ENCODE measurements at regions of chr9 and their contacts with region 1.

Region 1: DNA sequence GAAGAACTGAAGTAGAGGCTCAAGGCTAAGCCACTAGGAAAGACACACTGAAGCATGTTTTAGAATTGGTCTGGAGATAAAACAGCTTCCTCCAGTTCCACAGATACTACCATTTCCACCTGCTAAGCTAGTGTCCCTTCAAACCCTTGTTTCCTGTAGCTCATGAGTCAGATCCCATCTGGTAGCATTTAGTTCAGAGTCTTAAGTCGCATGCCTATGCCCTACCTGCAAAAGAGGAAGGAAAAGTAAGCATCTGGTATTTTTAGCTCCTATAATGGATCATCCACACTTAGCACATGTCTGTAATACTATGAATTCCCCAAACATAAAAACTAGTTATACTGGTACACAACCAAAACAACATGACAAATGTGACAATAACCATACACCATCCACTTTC is 92.1 kb downstream of the CDKN2A start:
- DNase-seq: no peak
- H3K4me3 ChIP-seq: no peak overlapping the region
- H3K27ac ChIP-seq: no peak overlapping the region
- H3K4me1 ChIP-seq: no peaks in the 10 kb centered on the region
- H3K27me3 ChIP-seq: no peaks in the 10 kb centered on the region
- CTCF ChIP-seq: no peak
- EP300 ChIP-seq: no peak
- POLR2A ChIP-seq: no peak

Region 2: GRCh38 chr9:21677834-21678233 is 224.3 kb before region 1 on chr9:
- intact Hi-C with region 1: no loop called
- DNase-seq: no peak
- H3K4me3 ChIP-seq: no peak overlapping the region
- H3K27ac ChIP-seq: no peak overlapping the region
- H3K4me1 ChIP-seq: no peaks in the 10 kb centered on the region
- H3K27me3 ChIP-seq: no peaks in the 10 kb centered on the region
- CTCF ChIP-seq: no peak
- EP300 ChIP-seq: no peak
- POLR2A ChIP-seq: no peak

Region 3: DNA sequence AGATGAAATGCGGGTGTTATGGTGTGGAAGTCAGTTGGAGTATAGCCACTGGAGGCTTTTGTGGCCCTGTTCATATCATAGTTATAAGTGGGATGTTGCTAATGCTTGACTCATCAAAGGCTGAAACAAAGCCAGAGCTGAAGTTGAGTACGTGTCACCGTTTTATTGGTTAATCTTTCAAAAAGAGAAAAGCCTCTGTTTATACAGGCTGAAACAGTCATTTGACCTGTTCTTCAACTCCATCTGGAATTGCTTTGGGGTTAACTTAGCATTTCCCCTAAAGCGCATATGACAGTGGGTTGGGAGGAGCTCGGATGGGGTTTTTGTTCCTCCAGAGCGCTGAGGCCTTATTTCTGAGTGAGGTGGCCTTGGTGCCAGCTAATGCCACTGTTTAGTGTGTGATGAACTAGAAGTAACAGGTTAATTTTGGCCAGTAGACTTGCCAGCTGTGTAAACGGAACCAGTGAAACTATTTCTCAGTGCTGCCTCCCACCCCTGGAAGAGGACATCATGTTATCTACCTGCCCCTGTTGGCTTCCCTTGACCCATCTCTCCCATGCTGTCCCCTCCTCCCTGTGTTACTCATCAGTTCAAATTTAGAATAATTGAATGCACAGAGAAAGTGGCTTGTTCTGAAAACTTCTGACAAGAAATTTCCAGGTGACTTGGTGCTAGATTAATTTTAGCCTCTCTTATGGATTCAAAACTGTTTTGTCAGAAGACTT is 65.5 kb before region 1 on chr9:
- intact Hi-C with region 1: no loop called
- DNase-seq: no peak
- H3K4me3 ChIP-seq: no peak overlapping the region
- H3K27ac ChIP-seq: no peak overlapping the region
- H3K4me1 ChIP-seq: peaks cover 0 to 27% (median 12%) of the 10 kb centered on the region in 4 donors
- H3K27me3 ChIP-seq: no peaks in the 10 kb centered on the region
- CTCF ChIP-seq: no peak
- EP300 ChIP-seq: no peak
- POLR2A ChIP-seq: no peak

Region 4: GRCh38 chr9:22052376-22052945 is 150.3 kb after region 1 on chr9:
- intact Hi-C with region 1: loop called (anchors 5 kb)
- DNase-seq: no peak
- H3K4me3 ChIP-seq: no peak overlapping the region
- H3K27ac ChIP-seq: no peak overlapping the region
- H3K4me1 ChIP-seq: no peaks in the 10 kb centered on the region
- H3K27me3 ChIP-seq: no peaks in the 10 kb centered on the region
- CTCF ChIP-seq: no peak
- EP300 ChIP-seq: no peak
- POLR2A ChIP-seq: no peak